Vagina (tissue), 2 donors: ENCODE measurements at regions of chr4 and their contacts with region 1.

Region 1: DNA sequence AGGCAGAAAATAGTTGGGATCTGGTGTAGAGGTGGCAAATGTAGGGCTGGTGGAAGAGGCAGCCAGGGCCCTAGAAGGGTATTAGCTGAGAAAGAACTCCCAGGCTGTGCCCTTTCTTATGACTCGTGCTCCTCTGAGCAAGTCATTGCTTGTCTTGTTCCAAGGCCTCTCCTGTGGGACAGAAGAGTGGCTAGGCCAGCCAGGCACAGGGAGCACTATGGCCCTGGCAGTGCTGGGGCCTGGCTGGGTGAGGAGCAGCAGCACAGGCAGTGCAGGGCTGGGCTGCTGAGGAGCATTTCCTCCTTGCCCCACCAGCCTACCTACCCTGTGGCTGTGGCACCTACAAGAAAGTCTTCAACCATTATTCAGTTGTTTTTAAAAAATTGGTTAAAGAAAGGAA is 298.5 kb upstream of the NR3C2 start:
- DNase-seq: no peak
- H3K4me3 ChIP-seq: no peak overlapping the region
- H3K27ac ChIP-seq: no peak overlapping the region
- H3K4me1 ChIP-seq: no peaks in the 10 kb centered on the region
- H3K27me3 ChIP-seq: no peaks in the 10 kb centered on the region
- CTCF ChIP-seq: no peak
- POLR2A ChIP-seq: no peak

Region 2: DNA sequence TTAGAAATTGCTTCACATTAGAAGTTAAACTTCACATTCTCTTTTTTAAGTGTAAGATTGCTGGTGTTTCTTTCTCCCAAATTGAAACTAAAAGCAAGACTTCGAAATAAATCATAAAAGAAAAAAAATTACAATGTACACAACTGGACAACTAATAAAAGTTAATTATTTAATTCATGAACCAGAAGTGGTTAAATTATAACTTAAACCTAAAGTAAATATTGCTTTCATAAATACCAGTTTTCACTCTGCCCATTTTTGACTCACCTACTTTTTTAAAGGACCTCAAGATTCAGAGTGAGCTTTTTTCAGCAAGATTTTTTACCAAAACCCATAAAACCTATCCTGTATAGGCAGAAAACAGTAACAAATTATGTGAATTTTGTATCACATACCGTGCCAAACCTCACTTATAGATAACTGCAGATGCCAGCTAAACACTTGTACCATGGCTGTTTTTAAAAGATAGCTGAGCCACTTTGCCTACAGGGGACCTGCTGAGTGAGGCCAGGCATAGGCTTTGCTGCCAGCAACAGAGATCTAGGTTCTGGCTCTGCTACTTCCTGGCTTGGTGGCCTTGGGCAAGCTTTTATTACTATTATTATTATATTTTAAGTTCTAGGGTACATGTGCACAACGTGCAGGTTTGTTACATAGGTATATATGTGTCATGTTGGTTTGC is 558.3 kb before region 1 on chr4:
- intact Hi-C with region 1: no loop called
- DNase-seq: no peak
- H3K4me3 ChIP-seq: no peak overlapping the region
- H3K27ac ChIP-seq: no peak overlapping the region
- H3K4me1 ChIP-seq: no peaks in the 10 kb centered on the region
- H3K27me3 ChIP-seq: no peaks in the 10 kb centered on the region
- CTCF ChIP-seq: no peak
- POLR2A ChIP-seq: no peak

Region 3: GRCh38 chr4:148704291-148704690 is 36.4 kb before region 1 on chr4:
- intact Hi-C with region 1: loop called (anchors 1 kb)
- DNase-seq: no peak
- H3K4me3 ChIP-seq: no peak overlapping the region
- H3K27ac ChIP-seq: no peak overlapping the region
- H3K4me1 ChIP-seq: no peaks in the 10 kb centered on the region
- H3K27me3 ChIP-seq: no peaks in the 10 kb centered on the region
- CTCF ChIP-seq: no peak
- POLR2A ChIP-seq: no peak